ENCODE measurements at regions of chr9 and their contacts with region 1.

Region 1: GRCh38 chr9:33290247-33291030 is at the start of gene NFX1:
- DNase-seq: peak; percentile 99
- ATAC-seq: peak; percentile 91
- H3K4me3 Mint-ChIP-seq: peak within 1 kb of the TSS; percentile 97
- H3K27ac Mint-ChIP-seq: peak within 1 kb of the TSS; percentile 100
- H3K4me1 Mint-ChIP-seq: peaks cover 65% of the 10 kb centered on the region
- H3K27me3 Mint-ChIP-seq: no peaks in the 10 kb centered on the region
- total RNA-seq, gene NFX1: 38.8 to 39.8 TPM

Region 2: DNA sequence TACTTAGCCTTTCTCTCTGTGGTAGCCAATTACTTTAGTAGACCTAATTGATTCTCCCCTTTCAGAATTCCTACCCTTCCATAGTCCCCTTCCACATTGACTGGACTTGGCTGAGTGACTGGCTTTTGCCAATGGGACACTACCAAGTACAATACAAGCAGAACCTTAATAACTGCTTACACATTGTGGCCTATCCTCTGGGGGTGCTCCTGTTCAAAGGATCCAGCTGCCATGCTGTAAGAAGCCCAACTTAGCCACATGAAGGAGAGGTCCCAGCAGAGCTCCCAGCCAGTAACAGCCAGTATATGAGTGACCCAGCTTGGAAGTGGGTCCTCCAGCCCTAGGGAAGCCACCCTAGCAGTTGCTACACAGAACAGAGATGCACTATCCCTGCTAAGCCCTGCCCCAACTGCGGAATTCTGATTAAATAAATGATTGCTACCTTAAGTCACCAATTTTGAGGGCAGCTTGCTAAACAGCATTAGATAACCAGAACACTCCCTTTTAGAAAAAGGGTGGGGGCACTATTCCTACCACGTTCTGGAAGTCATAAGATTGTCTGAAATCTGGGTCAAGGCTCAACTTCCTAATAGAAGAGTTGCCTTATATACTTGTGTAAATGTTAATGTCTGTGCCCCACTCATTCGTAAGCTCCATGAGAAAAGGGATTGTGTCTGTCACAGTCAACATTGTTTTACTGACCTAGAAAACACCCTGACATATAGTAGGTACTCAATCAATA is 277.9 kb before region 1 on chr9:
- CTCF ChIA-PET with region 1: no interaction called
- POLR2A ChIA-PET with region 1: no interaction called
- DNase-seq: no peak
- ATAC-seq: no peak
- H3K4me3 Mint-ChIP-seq: no peak overlapping the region
- H3K27ac Mint-ChIP-seq: no peak overlapping the region
- H3K4me1 Mint-ChIP-seq: no peaks in the 10 kb centered on the region
- H3K27me3 Mint-ChIP-seq: no peaks in the 10 kb centered on the region

Region 3: DNA sequence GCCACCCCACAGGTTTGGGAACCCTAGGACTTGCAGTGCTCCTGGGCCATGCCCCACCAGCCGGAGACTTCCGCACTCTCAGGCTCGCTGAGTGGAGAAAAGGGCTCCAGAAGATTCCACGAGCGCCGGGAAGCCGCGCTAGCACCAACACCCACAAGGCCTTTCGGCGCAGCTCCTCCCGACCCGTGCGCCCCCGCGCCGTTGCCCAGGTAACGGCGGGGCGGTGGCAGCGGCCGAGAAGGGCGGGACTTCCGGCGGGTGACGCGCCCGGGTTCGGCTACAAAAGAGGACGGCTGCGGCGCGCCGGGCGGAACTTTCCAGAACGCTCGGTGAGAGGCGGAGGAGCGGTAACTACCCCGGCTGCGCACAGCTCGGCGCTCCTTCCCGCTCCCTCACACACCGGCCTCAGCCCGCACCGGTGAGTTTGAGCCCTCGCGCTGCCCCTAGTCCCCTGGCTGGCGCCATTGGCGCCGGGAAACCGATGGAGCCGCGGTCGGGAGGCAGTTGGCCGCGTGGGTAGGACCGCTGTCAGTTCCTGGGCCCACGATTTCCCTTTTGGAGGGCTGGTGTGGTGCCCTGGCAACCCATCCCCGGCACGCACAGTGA is 265.4 kb before region 1 on chr9 and contains the start of gene DNAJA1:
- CTCF ChIA-PET with region 1: no interaction called
- POLR2A ChIA-PET with region 1: interaction called, 14 read pairs
- DNase-seq: peak; percentile 94
- ATAC-seq: peak; percentile 80
- H3K4me3 Mint-ChIP-seq: peak within 1 kb of the TSS; percentile 96
- H3K27ac Mint-ChIP-seq: peak within 1 kb of the TSS; percentile 91
- H3K4me1 Mint-ChIP-seq: peaks cover 60% of the 10 kb centered on the region
- H3K27me3 Mint-ChIP-seq: no peaks in the 10 kb centered on the region
- total RNA-seq, gene DNAJA1: 158 to 159 TPM

Region 4: GRCh38 chr9:33306037-33306436 is 15.6 kb after region 1 on chr9:
- CTCF ChIA-PET with region 1: interaction called, 8 read pairs
- POLR2A ChIA-PET with region 1: interaction called, 12 read pairs
- DNase-seq: no peak
- ATAC-seq: peak; percentile 72
- H3K4me3 Mint-ChIP-seq: no peak overlapping the region
- H3K27ac Mint-ChIP-seq: no peak overlapping the region
- H3K4me1 Mint-ChIP-seq: peaks cover 7% of the 10 kb centered on the region
- H3K27me3 Mint-ChIP-seq: no peaks in the 10 kb centered on the region

Region 5: GRCh38 chr9:33393581-33393980 is 103.1 kb after region 1 on chr9:
- CTCF ChIA-PET with region 1: no interaction called
- POLR2A ChIA-PET with region 1: no interaction called
- DNase-seq: no peak
- ATAC-seq: no peak
- H3K4me3 Mint-ChIP-seq: no peak overlapping the region
- H3K27ac Mint-ChIP-seq: no peak overlapping the region
- H3K4me1 Mint-ChIP-seq: peaks cover 4% of the 10 kb centered on the region
- H3K27me3 Mint-ChIP-seq: peaks cover 9% of the 10 kb centered on the region

Region 6: GRCh38 chr9:33452828-33453271 is 162.4 kb after region 1 on chr9:
- CTCF ChIA-PET with region 1: interaction called, 10 read pairs
- POLR2A ChIA-PET with region 1: interaction called, 8 read pairs
- DNase-seq: peak; percentile 68
- ATAC-seq: peak; percentile 77
- H3K4me3 Mint-ChIP-seq: no peak overlapping the region
- H3K27ac Mint-ChIP-seq: peak overlapping the region; percentile 84
- H3K4me1 Mint-ChIP-seq: peaks cover 62% of the 10 kb centered on the region
- H3K27me3 Mint-ChIP-seq: no peaks in the 10 kb centered on the region

Region 7: GRCh38 chr9:33473643-33474352 is 183.4 kb after region 1 on chr9 and contains the start of gene NOL6:
- CTCF ChIA-PET with region 1: interaction called, 3 read pairs
- POLR2A ChIA-PET with region 1: interaction called, 14 read pairs
- DNase-seq: peak; percentile 99
- ATAC-seq: peak; percentile 100
- H3K4me3 Mint-ChIP-seq: peak within 1 kb of the TSS; percentile 98
- H3K27ac Mint-ChIP-seq: peak within 1 kb of the TSS; percentile 95
- H3K4me1 Mint-ChIP-seq: peaks cover 28% of the 10 kb centered on the region
- H3K27me3 Mint-ChIP-seq: no peaks in the 10 kb centered on the region
- total RNA-seq, gene NOL6: 37.1 to 38.8 TPM